RWPE1 (cell line): ENCODE measurements at regions of chr11 and their contacts with region 1.

Region 1: GRCh38 chr11:75135021-75135650 is 15.8 kb upstream of the SLCO2B1 start:
- DNase-seq: no peak
- H3K27ac ChIP-seq: no peak overlapping the region
- CTCF ChIP-seq: no peak

Region 2: DNA sequence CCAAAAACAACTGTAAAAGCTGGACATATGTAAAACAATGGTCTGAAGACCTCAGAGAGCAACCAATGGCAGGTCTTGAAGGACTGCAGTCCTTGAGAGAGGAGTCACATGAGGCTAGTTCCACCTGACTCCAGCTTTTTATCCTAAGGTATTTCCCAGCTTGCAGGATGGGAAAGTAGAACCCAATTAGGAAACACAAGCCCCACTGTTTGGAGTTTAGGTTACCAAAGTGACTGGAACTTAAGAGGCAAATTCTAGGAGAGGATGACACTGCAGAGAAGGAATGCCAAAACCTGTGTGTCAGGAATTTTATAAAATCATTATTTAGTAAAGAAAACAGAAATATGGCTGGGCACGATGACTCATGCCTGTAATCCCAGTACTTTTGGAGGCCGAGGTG is 56.9 kb before region 1 on chr11:
- CTCF ChIA-PET with region 1: no interaction called
- POLR2A ChIA-PET with region 1: no interaction called
- DNase-seq: peak; percentile 13
- H3K27ac ChIP-seq: no peak overlapping the region
- CTCF ChIP-seq: no peak

Region 3: GRCh38 chr11:75112200-75112599 is 22.9 kb before region 1 on chr11:
- CTCF ChIA-PET with region 1: interaction called, 11 read pairs
- POLR2A ChIA-PET with region 1: no interaction called
- DNase-seq: no peak
- H3K27ac ChIP-seq: no peak overlapping the region
- CTCF ChIP-seq: no peak